Lower leg skin (tissue), 4 donors: ENCODE measurements at regions of chr1 and their contacts with region 1.

Region 1: GRCh38 chr1:78676347-78676982 is 26.8 kb downstream of the IFI44 start:
- DNase-seq: peak in 1 of 2 donors; percentile 64
- H3K4me3 ChIP-seq: no peak overlapping the region
- CTCF ChIP-seq: peak in 1 of 3 donors; percentile 37
- POLR2A ChIP-seq: no peak

Region 2: DNA sequence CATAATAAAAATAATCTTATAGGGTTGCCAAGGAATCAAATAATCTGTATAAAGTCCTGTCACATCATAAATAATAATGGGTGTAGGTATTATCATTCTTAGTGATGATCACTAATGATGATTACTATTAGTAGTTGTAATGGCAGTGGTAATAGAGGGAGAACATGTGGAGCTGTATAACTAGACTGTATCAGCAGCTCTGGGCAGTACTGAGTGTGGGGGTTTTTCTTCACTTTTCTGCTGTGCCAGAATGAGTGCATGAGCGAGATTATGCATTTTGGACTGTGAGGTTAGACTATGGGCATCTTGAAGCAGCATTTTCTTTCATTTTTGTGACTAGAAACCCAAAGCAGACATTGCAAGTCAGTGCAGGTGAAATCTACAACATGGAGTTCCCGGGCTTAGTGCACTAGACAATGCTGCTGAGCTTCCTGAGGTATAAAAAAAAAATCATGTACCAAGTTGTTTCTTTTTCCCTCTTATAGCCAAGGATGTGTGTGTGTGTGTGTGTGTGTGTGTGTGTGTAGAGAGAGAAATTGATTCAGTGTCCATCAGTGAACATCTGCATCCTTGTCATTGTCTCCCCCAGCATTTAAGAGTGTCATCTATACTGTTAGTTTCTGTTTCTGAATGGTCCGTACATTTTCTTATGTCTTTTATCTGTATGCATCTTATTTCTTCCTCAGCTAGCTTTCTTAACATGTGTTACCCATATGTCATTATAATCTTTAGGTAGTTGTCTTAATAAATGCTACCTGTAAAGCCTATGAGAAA is 544.1 kb before region 1 on chr1:
- intact Hi-C with region 1: loop called (anchors 10 kb)
- DNase-seq: no peak
- H3K4me3 ChIP-seq: no peak overlapping the region
- CTCF ChIP-seq: no peak
- POLR2A ChIP-seq: no peak

Region 3: GRCh38 chr1:79737193-79737592 is 1060.7 kb after region 1 on chr1:
- intact Hi-C with region 1: no loop called
- DNase-seq: no peak
- H3K4me3 ChIP-seq: no peak overlapping the region
- CTCF ChIP-seq: no peak
- POLR2A ChIP-seq: no peak